PC-9 (cell line): ENCODE measurements at regions of chr7 and their contacts with region 1.

Region 1: DNA sequence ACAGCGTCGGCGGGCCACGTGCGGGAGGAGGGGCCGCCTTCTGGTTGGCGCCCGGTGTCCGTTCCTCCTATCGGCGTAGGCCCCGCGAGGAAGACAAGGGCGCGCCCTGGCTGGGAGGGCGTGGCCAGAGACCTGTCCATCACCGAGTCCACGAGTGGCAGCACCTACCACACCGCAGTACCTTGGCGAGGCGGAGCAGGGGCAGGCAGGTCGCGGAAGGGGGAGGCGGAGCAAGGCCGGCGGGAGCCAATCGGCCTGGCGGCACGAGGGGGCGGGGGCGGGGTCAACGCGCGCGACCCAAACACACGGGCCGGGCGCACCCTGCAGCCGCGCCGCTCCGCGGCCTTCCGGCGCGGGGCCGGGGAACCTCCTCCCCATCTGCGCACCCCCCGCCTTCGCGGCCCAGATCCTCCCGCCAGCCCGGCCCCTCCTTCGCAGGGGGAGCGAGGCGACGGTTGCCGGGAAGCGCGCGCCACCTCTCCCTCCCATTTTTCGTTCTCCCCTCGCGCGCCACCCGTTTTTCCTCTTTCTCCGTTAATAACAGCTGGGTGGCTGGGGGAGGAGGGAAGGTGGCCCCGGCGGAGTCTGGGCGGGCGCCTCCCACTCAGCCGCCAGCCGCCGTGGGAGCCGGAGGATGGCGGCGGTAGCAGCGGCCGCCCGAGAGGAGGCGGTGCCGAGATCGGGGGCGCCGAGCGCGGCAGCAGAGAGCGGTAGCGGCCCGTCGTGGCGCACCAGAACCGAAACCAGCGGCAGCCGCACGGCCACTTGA is at the start of gene ZNRF2:
- DNase-seq: peak; percentile 99 to 100
- H3K4me3 ChIP-seq: peak within 1 kb of the TSS; percentile 74
- H3K27ac ChIP-seq: peak within 1 kb of the TSS; percentile 79
- H3K4me1 ChIP-seq: peaks cover 32% of the 10 kb centered on the region
- H3K27me3 ChIP-seq: no peaks in the 10 kb centered on the region
- CTCF ChIP-seq: no peak; the same call in 1 of the 2 replicates
- total RNA-seq, gene ZNRF2: 24.7 and 28.2 TPM in 2 replicates

Region 2: DNA sequence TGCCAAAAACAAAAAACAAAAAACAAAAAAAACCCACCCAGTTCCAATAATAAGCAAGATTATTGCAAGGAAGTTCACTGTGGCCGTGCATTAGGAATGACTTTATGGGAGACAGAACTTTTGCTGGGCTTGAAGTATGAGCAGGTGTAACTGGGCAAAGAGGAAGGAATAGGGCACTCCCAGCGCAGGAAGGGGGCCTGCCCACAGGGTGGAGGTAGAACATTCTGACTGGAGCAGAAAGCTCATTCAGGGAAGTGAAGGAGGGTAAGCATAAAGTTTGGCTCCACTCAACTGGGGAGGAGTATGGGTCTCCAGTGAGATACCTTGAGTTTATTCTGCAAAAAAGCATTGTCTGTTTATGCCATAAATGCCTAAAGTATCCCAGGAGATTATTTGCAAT is 520.3 kb before region 1 on chr7:
- CTCF ChIA-PET with region 1: no interaction called
- POLR2A ChIA-PET with region 1: no interaction called
- intact Hi-C with region 1: no loop called
- DNase-seq: no peak
- H3K4me3 ChIP-seq: no peak overlapping the region
- H3K27ac ChIP-seq: no peak overlapping the region
- H3K4me1 ChIP-seq: no peaks in the 10 kb centered on the region
- H3K27me3 ChIP-seq: peaks cover 23% of the 10 kb centered on the region
- CTCF ChIP-seq: no peak

Region 3: GRCh38 chr7:30026229-30027064 is 258.0 kb before region 1 on chr7 and contains the start of gene FKBP14:
- CTCF ChIA-PET with region 1: no interaction called
- POLR2A ChIA-PET with region 1: no interaction called
- intact Hi-C with region 1: loop called (anchors 2 kb)
- DNase-seq: peak; percentile 97 to 99
- H3K4me3 ChIP-seq: peak within 1 kb of the TSS; percentile 75
- H3K27ac ChIP-seq: peak within 1 kb of the TSS; percentile 66
- H3K4me1 ChIP-seq: peaks cover 43% of the 10 kb centered on the region
- H3K27me3 ChIP-seq: no peaks in the 10 kb centered on the region
- CTCF ChIP-seq: no peak
- total RNA-seq, gene FKBP14: 29.8 and 29.9 TPM in 2 replicates

Region 4: GRCh38 chr7:30134611-30135545 is 149.6 kb before region 1 on chr7 and contains the start of gene MTURN:
- CTCF ChIA-PET with region 1: no interaction called
- POLR2A ChIA-PET with region 1: no interaction called
- intact Hi-C with region 1: loop called (anchors 2 kb)
- DNase-seq: peak; percentile 81 to 94
- H3K4me3 ChIP-seq: peak within 1 kb of the TSS; percentile 55
- H3K27ac ChIP-seq: no peak within 1 kb of the TSS
- H3K4me1 ChIP-seq: peaks cover 8% of the 10 kb centered on the region; the same call in 1 of the 2 replicates
- H3K27me3 ChIP-seq: peaks cover 12% of the 10 kb centered on the region; the same call in 1 of the 2 replicates
- CTCF ChIP-seq: no peak
- total RNA-seq, gene MTURN: 21.6 and 23.1 TPM in 2 replicates

Region 5: GRCh38 chr7:30225863-30226613 is 58.4 kb before region 1 on chr7:
- CTCF ChIA-PET with region 1: interaction called, 3 read pairs
- POLR2A ChIA-PET with region 1: no interaction called
- intact Hi-C with region 1: loop called (anchors 1 kb)
- DNase-seq: peak; percentile 84 to 99
- H3K4me3 ChIP-seq: peak overlapping the region; percentile 43
- H3K27ac ChIP-seq: peak overlapping the region; percentile 97
- H3K4me1 ChIP-seq: peaks cover 33% of the 10 kb centered on the region
- H3K27me3 ChIP-seq: no peaks in the 10 kb centered on the region
- CTCF ChIP-seq: no peak

Region 6: DNA sequence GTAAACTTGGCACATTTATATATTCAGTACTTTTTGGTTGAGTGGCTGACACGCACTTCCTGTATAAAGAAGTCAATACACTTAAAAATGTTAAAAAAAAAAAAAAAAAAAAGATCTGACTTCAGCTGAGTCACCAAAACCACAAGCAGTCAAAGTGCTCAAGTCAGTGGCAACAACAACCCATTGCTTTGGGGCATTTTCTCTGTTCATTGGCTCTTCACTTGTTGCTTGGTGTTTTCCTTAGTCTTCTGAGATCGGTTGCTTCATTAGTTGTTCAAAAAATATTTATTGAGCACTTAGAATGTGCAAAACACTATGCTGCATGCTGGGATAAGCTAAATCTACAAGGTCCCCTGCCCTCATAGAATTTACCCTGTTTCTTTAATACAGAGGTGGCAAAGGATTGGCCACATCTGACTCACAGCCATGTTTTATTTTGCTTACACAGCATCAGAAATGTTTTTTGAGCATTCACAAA is 63.6 kb after region 1 on chr7:
- CTCF ChIA-PET with region 1: interaction called, 6 read pairs
- POLR2A ChIA-PET with region 1: no interaction called
- intact Hi-C with region 1: loop called (anchors 1 kb)
- DNase-seq: peak; percentile 56 to 95
- H3K4me3 ChIP-seq: peak overlapping the region; percentile 13; the same call in 1 of the 2 replicates
- H3K27ac ChIP-seq: peak overlapping the region; percentile 81
- H3K4me1 ChIP-seq: peaks cover 37% of the 10 kb centered on the region
- H3K27me3 ChIP-seq: no peaks in the 10 kb centered on the region
- CTCF ChIP-seq: no peak

Region 7: GRCh38 chr7:30412810-30413504 is 128.5 kb after region 1 on chr7:
- CTCF ChIA-PET with region 1: no interaction called
- POLR2A ChIA-PET with region 1: no interaction called
- intact Hi-C with region 1: loop called (anchors 2 kb)
- DNase-seq: peak; percentile 40 to 80
- H3K4me3 ChIP-seq: no peak overlapping the region
- H3K27ac ChIP-seq: no peak overlapping the region
- H3K4me1 ChIP-seq: no peaks in the 10 kb centered on the region
- H3K27me3 ChIP-seq: no peaks in the 10 kb centered on the region
- CTCF ChIP-seq: peak; percentile 84

Region 8: DNA sequence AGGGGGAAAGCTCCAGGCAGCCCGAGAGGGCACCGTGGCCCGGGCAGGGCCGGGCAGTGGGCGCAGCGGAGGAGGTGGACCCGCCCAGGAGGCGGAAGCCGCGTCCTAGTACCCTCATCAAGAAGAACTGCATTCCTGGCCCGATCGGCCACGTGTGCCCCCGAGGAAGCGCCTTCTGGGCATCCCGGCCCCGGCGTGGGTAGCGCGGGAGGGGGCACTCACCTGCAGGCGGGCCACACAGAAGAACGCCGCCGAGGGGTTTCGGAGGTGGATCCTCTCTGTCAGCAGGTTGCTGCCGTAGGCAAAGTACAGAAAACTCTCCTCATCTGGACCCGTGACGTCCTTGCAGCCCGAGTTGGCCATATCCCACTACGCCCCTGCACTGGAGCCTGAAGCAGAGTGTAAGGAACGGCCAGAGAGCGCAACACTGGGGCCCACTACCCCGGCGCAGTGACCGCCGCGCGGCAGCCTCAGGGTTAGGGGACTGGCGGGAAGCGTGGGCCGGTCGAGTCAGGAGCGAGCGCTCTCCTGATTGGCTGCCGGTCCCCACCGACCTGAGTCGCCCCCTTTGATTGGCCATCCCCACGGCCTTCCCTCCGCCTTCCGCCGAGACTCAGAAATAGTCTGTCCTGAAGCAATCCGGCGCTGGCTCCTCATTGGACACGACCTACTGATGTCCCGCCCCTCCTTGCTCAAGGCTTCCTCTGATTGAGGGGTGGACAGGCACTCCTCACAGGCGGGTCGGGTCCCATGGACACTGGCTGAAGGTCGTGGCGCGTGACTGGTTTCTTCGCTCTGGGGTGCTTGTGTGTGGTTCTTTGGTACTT is 220.1 kb after region 1 on chr7 and contains the start of gene GGCT:
- CTCF ChIA-PET with region 1: no interaction called
- POLR2A ChIA-PET with region 1: no interaction called
- intact Hi-C with region 1: loop called (anchors 2 kb)
- DNase-seq: peak; percentile 99
- H3K4me3 ChIP-seq: peak within 1 kb of the TSS; percentile 81
- H3K27ac ChIP-seq: peak within 1 kb of the TSS; percentile 27
- H3K4me1 ChIP-seq: peaks cover 62% of the 10 kb centered on the region
- H3K27me3 ChIP-seq: no peaks in the 10 kb centered on the region
- CTCF ChIP-seq: no peak
- total RNA-seq, gene GGCT: 151 and 162 TPM in 2 replicates